A673 (cell line): ENCODE measurements at regions of chr16 and their contacts with region 1.

Region 1: GRCh38 chr16:66406534-66407221 is 20.4 kb upstream of the BEAN1 start:
- DNase-seq: peak; percentile 81
- H3K4me3 ChIP-seq: peak overlapping the region; percentile 60
- H3K27ac ChIP-seq: no peak overlapping the region
- H3K4me1 ChIP-seq: peaks cover 15% of the 10 kb centered on the region
- H3K27me3 ChIP-seq: no peaks in the 10 kb centered on the region
- CTCF ChIP-seq: peak; percentile 90

Region 2: DNA sequence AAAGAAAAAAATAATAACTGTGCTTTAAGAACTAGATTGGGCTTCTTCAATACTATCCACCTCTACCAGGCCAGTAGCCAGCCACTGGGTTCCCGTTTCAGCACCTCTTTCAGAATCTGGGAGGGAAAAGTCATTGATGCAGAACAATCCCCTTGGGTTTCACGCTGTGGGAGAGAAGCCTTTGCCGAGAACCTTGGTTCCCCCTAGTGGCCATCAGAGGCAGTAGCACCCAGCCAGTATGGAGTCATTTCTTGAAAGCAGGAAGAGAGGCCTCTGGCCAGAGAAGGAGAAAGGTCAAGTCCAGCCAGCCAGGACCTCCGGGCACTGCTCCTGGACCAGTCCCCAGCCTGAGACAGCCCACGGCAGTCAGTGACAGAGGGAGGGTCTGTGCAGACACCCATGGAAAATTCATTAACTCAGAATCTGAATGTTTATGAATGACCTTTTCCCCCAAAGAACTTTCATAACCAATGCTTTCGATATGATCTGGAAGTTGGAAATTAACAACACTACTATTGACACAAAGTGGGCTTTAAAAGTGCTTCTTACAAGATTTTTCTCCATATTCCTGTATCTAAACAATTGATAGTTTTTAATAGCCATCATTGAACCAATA is 91.4 kb before region 1 on chr16:
- CTCF ChIA-PET with region 1: no interaction called
- POLR2A ChIA-PET with region 1: no interaction called
- intact Hi-C with region 1: no loop called
- DNase-seq: peak; percentile 87
- H3K4me3 ChIP-seq: no peak overlapping the region
- H3K27ac ChIP-seq: no peak overlapping the region
- H3K4me1 ChIP-seq: peaks cover 6% of the 10 kb centered on the region
- H3K27me3 ChIP-seq: no peaks in the 10 kb centered on the region
- CTCF ChIP-seq: peak; percentile 99

Region 3: DNA sequence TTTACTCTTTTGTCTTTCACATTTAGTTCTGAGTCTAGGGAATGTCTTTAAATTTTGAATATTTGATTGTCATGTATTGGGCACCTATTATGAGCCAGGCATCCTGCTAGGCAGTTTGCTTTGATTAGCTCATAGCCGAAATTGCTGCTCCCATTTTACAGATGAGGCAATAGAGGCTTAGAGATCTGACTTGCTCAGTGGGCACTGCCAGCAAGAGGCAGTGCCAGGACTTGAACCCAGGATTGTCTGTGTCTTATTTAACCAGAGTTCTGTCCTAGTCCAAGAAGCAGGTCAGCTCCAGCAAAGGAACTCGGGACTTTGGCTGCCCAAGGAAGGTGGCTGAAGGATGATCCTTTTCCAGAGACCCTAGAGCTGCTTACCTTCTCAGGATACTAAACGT is 44.9 kb after region 1 on chr16:
- CTCF ChIA-PET with region 1: no interaction called
- POLR2A ChIA-PET with region 1: no interaction called
- intact Hi-C with region 1: no loop called
- DNase-seq: no peak
- H3K4me3 ChIP-seq: no peak overlapping the region
- H3K27ac ChIP-seq: no peak overlapping the region
- H3K4me1 ChIP-seq: no peaks in the 10 kb centered on the region
- H3K27me3 ChIP-seq: no peaks in the 10 kb centered on the region
- CTCF ChIP-seq: no peak

Region 4: DNA sequence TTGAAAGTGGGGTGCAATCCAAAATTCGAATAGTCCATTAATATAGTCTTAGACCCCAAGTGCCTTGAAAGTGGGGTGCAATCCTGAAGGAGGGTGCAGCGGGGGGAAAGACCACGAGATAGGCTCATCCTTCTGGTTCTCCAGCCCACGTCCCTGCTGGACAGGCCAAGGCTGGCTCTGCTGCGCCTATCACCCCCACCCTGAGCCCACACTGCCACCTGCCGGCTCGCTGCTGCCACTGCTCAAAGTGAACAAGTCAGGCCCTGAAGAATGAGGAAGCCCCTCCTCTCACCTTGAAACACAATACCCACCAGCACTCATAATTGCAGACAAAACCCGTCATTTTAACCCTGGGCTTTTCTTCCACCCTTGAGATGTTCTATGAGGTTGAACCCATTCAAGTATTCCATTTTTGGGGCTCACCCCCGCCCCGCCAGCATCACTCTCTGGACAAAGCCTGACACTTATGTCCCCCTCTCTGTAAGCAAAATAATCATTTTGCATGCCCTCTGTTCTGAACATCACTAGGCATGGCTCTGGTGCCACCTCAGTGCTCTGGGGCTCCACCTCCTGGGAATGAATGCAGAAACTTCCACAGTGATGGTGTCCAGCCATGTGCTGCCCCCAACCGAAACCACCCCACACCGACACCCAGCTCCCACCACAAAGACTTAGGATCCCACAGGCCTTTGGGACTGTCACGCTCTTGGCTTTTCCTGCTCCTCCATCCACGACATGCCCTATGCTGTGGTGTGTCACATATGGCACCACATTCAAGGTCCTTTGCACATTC is 77.2 kb after region 1 on chr16:
- CTCF ChIA-PET with region 1: interaction called, 5 read pairs
- POLR2A ChIA-PET with region 1: no interaction called
- intact Hi-C with region 1: loop called (anchors 1 kb)
- DNase-seq: peak; percentile 81
- H3K4me3 ChIP-seq: no peak overlapping the region
- H3K27ac ChIP-seq: no peak overlapping the region
- H3K4me1 ChIP-seq: no peaks in the 10 kb centered on the region
- H3K27me3 ChIP-seq: no peaks in the 10 kb centered on the region
- CTCF ChIP-seq: peak; percentile 98

Region 5: GRCh38 chr16:66608241-66609138 is 201.8 kb after region 1 on chr16:
- CTCF ChIA-PET with region 1: interaction called, 4 read pairs
- POLR2A ChIA-PET with region 1: no interaction called
- intact Hi-C with region 1: loop called (anchors 2 kb)
- DNase-seq: peak; percentile 83
- H3K4me3 ChIP-seq: no peak overlapping the region
- H3K27ac ChIP-seq: no peak overlapping the region
- H3K4me1 ChIP-seq: peaks cover 18% of the 10 kb centered on the region
- H3K27me3 ChIP-seq: no peaks in the 10 kb centered on the region
- CTCF ChIP-seq: peak; percentile 95

Region 6: GRCh38 chr16:66728117-66728787 is 321.6 kb after region 1 on chr16:
- CTCF ChIA-PET with region 1: no interaction called
- POLR2A ChIA-PET with region 1: no interaction called
- intact Hi-C with region 1: loop called (anchors 5 kb)
- DNase-seq: peak; percentile 76
- H3K4me3 ChIP-seq: no peak overlapping the region
- H3K27ac ChIP-seq: no peak overlapping the region
- H3K4me1 ChIP-seq: no peaks in the 10 kb centered on the region
- H3K27me3 ChIP-seq: no peaks in the 10 kb centered on the region
- CTCF ChIP-seq: peak; percentile 69

Region 7: GRCh38 chr16:66740010-66740409 is 333.3 kb after region 1 on chr16:
- CTCF ChIA-PET with region 1: no interaction called
- POLR2A ChIA-PET with region 1: no interaction called
- intact Hi-C with region 1: loop called (anchors 2 kb)
- DNase-seq: peak; percentile 68
- H3K4me3 ChIP-seq: no peak overlapping the region
- H3K27ac ChIP-seq: peak overlapping the region; percentile 25
- H3K4me1 ChIP-seq: peaks cover 14% of the 10 kb centered on the region
- H3K27me3 ChIP-seq: no peaks in the 10 kb centered on the region
- CTCF ChIP-seq: peak; percentile 88

Region 8: GRCh38 chr16:66859397-66860068 is 452.9 kb after region 1 on chr16:
- CTCF ChIA-PET with region 1: no interaction called
- POLR2A ChIA-PET with region 1: no interaction called
- intact Hi-C with region 1: loop called (anchors 10 kb)
- DNase-seq: no peak
- H3K4me3 ChIP-seq: no peak overlapping the region
- H3K27ac ChIP-seq: no peak overlapping the region
- H3K4me1 ChIP-seq: peaks cover 25% of the 10 kb centered on the region
- H3K27me3 ChIP-seq: no peaks in the 10 kb centered on the region
- CTCF ChIP-seq: no peak